WTC11 (cell line): ENCODE measurements at regions of chr6 and their contacts with region 1.

Region 1: GRCh38 chr6:35522660-35523658 is 10.3 kb upstream of the TULP1 start:
- DNase-seq: peak; percentile 91
- ATAC-seq: peak; percentile 87
- H3K4me3 Mint-ChIP-seq: peak overlapping the region; percentile 41
- H3K27ac Mint-ChIP-seq: no peak overlapping the region
- H3K4me1 Mint-ChIP-seq: peaks cover 19% of the 10 kb centered on the region
- H3K27me3 Mint-ChIP-seq: no peaks in the 10 kb centered on the region; the same call in 1 of the 2 replicates
- CTCF ChIP-seq: peak; percentile 99

Region 2: DNA sequence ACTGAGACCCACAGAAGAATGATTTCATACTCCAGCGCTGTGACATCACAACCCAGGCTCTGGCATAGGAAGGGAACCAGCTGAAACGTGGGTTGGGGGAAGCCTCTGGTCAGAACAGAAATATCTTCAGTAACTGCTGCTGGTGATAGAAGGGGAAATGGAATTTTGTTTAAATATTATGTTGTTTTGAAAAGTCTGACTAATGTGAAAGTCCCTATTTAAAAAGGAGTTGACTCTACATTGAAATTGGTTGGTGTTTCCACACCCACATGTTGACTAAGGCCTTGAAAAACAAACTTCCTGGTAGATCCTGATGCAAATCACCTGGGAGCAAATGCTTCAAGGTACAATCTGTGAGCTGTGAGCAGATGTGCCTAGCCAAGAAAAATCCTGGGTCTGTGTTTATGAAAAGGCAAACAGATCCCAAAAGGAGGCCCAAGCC is 357.3 kb before region 1 on chr6:
- CTCF ChIA-PET with region 1: no interaction called
- POLR2A ChIA-PET with region 1: no interaction called
- DNase-seq: no peak
- ATAC-seq: no peak
- H3K4me3 Mint-ChIP-seq: no peak overlapping the region
- H3K27ac Mint-ChIP-seq: no peak overlapping the region
- H3K4me1 Mint-ChIP-seq: peaks cover 18% of the 10 kb centered on the region
- H3K27me3 Mint-ChIP-seq: peaks cover 14% of the 10 kb centered on the region
- CTCF ChIP-seq: no peak

Region 3: DNA sequence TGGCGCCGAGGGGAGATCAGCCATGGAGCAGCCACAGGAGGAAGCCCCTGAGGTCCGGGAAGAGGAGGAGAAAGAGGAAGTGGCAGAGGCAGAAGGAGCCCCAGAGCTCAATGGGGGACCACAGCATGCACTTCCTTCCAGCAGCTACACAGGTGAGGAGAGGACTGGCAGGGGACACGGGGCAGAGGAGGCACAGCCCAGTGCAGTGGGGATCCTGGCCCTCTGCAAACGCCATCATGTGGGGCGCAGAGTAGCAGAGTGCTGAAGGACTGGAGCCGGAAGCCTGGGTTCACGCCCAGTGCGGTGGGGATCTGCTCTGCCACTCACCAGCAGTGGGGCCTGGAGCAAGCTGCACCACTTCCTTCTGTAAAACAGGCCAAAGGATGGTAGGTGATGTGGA is 111.9 kb before region 1 on chr6:
- CTCF ChIA-PET with region 1: no interaction called
- POLR2A ChIA-PET with region 1: no interaction called
- DNase-seq: no peak
- ATAC-seq: no peak
- H3K4me3 Mint-ChIP-seq: no peak overlapping the region
- H3K27ac Mint-ChIP-seq: peak overlapping the region; percentile 35; the same call in 1 of the 2 replicates
- H3K4me1 Mint-ChIP-seq: peaks cover 11% of the 10 kb centered on the region
- H3K27me3 Mint-ChIP-seq: no peaks in the 10 kb centered on the region; the same call in 1 of the 2 replicates
- CTCF ChIP-seq: no peak

Region 4: GRCh38 chr6:35489995-35490733 is 32.8 kb before region 1 on chr6:
- CTCF ChIA-PET with region 1: interaction called, 17 read pairs
- POLR2A ChIA-PET with region 1: no interaction called
- DNase-seq: peak; percentile 87
- ATAC-seq: peak; percentile 16
- H3K4me3 Mint-ChIP-seq: peak overlapping the region; percentile 72
- H3K27ac Mint-ChIP-seq: peak overlapping the region; percentile 97
- H3K4me1 Mint-ChIP-seq: peaks cover 80% of the 10 kb centered on the region
- H3K27me3 Mint-ChIP-seq: peaks cover 4% of the 10 kb centered on the region
- CTCF ChIP-seq: no peak

Region 5: DNA sequence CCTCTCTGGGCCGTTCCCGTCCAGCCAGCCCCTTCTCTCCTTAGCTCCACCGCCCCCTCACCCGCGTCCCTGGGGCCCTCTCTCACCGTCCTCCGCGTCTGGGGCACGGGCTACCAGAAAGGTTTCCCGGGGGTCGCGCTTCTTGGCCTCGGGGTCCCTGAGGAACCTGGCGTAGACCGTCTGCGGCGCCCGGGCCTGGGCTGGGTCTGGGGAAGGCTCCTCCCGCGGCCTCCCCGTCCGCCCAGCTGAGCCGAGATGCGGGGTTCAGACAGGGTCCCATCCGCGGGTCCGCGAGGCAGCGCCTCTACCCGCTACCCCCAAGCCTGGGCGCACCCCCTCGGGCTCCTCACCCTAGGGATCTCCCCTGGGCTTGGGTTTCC is 11.4 kb before region 1 on chr6:
- CTCF ChIA-PET with region 1: interaction called, 40 read pairs
- POLR2A ChIA-PET with region 1: interaction called, 3 read pairs
- DNase-seq: peak; percentile 28
- ATAC-seq: peak; percentile 11
- H3K4me3 Mint-ChIP-seq: peak overlapping the region; percentile 55
- H3K27ac Mint-ChIP-seq: no peak overlapping the region
- H3K4me1 Mint-ChIP-seq: peaks cover 39% of the 10 kb centered on the region
- H3K27me3 Mint-ChIP-seq: peaks cover 27% of the 10 kb centered on the region
- CTCF ChIP-seq: no peak

Region 6: DNA sequence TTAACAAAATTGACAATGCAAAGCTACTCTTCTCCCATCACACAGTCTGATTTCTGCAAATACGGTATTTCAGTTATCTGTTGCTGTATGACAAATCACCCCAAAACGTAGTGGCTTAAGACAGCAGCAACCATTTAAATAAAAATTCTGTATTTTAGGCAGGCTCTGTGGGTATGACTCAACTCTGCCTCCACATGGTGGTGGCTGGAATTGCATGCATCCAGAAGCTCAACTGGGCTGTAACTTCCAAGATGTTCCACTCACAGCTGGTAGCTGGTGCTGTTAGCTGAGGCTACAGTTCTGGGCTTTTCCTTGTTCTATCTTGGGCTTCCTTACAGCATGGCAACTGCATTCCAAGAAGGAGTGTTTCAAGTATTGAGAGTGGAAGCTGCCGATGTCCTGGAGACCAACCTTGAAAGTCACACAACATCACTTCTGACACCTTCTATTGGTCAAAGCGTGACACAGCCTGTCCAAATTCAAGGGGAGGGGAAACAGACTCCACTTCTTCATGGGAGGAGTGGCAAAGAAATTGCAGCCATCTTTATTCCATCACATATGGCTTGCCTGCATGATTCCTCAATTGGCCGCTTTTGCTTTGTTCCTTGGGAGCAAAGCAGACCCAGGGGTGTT is 29.4 kb after region 1 on chr6:
- CTCF ChIA-PET with region 1: interaction called, 147 read pairs
- POLR2A ChIA-PET with region 1: interaction called, 3 read pairs
- DNase-seq: peak; percentile 79
- ATAC-seq: peak; percentile 74
- H3K4me3 Mint-ChIP-seq: no peak overlapping the region
- H3K27ac Mint-ChIP-seq: no peak overlapping the region
- H3K4me1 Mint-ChIP-seq: no peaks in the 10 kb centered on the region
- H3K27me3 Mint-ChIP-seq: no peaks in the 10 kb centered on the region
- CTCF ChIP-seq: peak; percentile 92

Region 7: GRCh38 chr6:35583893-35584688 is 61.1 kb after region 1 on chr6:
- CTCF ChIA-PET with region 1: interaction called, 17 read pairs
- POLR2A ChIA-PET with region 1: no interaction called
- DNase-seq: peak; percentile 75
- ATAC-seq: peak; percentile 86
- H3K4me3 Mint-ChIP-seq: no peak overlapping the region
- H3K27ac Mint-ChIP-seq: no peak overlapping the region
- H3K4me1 Mint-ChIP-seq: peaks cover 4% of the 10 kb centered on the region; the same call in 1 of the 2 replicates
- H3K27me3 Mint-ChIP-seq: no peaks in the 10 kb centered on the region
- CTCF ChIP-seq: peak; percentile 73

Region 8: DNA sequence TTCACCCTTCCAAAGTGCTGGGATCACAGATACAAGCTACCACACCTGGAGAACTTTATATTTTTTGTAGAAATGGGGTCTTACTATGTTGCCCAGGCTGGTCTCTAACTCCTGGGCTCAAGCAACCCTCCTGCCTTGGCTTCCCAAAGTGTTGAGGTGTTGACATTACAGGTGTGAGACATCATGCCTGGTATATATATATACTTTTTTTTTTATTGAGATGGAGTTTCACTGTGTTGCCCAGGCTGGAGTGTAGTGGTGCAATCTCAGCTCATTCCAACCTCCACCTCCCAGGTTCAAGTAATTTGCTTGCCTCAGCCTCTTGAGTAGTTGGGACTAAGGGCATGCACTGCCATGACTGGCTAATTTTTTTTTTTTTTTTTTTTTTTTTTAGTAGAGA is 160.3 kb after region 1 on chr6:
- CTCF ChIA-PET with region 1: interaction called, 10 read pairs
- POLR2A ChIA-PET with region 1: no interaction called
- DNase-seq: no peak
- ATAC-seq: no peak
- H3K4me3 Mint-ChIP-seq: no peak overlapping the region
- H3K27ac Mint-ChIP-seq: no peak overlapping the region
- H3K4me1 Mint-ChIP-seq: peaks cover 22% of the 10 kb centered on the region
- H3K27me3 Mint-ChIP-seq: peaks cover 14% of the 10 kb centered on the region
- CTCF ChIP-seq: no peak

Region 9: DNA sequence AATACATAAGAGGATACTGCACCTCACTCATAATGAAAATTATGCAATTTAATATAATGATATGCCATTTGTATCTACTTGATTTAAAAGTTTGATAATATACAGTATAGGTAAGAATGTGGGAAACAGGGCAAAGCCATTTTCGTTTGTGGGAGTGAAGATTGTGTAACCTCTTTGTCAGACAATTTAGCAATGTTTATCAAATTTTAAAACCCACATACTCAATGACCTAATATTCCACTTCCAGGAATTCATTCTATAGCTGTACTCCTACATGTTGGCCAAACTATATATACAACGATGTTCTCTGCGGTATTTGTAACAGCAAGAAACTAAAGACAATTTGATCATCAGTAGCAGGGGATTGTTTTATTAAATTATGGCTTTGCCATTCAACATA is 183.5 kb after region 1 on chr6:
- CTCF ChIA-PET with region 1: no interaction called
- POLR2A ChIA-PET with region 1: no interaction called
- DNase-seq: no peak
- ATAC-seq: no peak
- H3K4me3 Mint-ChIP-seq: no peak overlapping the region
- H3K27ac Mint-ChIP-seq: no peak overlapping the region
- H3K4me1 Mint-ChIP-seq: no peaks in the 10 kb centered on the region
- H3K27me3 Mint-ChIP-seq: no peaks in the 10 kb centered on the region
- CTCF ChIP-seq: no peak

Region 10: GRCh38 chr6:35777361-35778066 is 254.6 kb after region 1 on chr6:
- CTCF ChIA-PET with region 1: no interaction called
- POLR2A ChIA-PET with region 1: no interaction called
- DNase-seq: no peak
- ATAC-seq: no peak
- H3K4me3 Mint-ChIP-seq: peak overlapping the region; percentile 59
- H3K27ac Mint-ChIP-seq: no peak overlapping the region
- H3K4me1 Mint-ChIP-seq: peaks cover 13% of the 10 kb centered on the region
- H3K27me3 Mint-ChIP-seq: peaks cover 13% of the 10 kb centered on the region
- CTCF ChIP-seq: no peak